HEK293 (cell line): ENCODE measurements at regions of chr11 and their contacts with region 1.

Region 1: DNA sequence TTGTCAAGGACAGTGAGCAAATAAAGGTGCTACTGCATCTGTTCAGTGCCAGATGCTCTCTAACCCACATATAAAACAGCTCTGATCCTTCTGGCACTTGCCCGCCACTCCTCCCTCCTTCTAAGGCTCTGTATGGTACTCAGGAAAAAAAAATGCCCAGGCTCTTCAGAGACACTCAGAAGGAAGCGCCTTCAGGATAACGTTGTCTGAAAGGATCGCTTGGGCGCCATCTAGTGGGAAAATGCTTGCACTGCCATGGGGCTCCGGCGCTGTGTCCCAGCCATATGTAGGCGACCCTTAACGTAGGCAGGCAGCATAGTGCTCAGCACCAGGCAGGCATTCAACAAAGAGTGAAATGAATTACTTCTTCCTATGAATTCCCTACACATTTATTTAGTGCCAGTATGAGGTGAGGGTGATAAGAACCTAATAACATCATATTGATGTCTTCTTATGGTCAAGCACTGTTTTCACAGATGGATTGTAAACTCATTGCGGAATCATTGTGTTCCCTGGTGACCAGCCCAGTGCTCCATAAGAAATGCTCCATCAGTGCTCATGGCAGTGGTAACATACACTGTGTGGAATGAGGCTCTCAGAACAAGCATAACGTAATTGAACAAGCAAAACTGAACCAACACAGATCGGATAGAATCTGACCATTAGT is 39.6 kb downstream of the PAMR1 start:
- H3K4me3 ChIP-seq: no peak overlapping the region
- H3K27ac ChIP-seq: no peak overlapping the region
- H3K4me1 ChIP-seq: no peaks in the 10 kb centered on the region
- CTCF ChIP-seq: peak; percentile 45; the same call in 1 of the 2 replicates

Region 2: DNA sequence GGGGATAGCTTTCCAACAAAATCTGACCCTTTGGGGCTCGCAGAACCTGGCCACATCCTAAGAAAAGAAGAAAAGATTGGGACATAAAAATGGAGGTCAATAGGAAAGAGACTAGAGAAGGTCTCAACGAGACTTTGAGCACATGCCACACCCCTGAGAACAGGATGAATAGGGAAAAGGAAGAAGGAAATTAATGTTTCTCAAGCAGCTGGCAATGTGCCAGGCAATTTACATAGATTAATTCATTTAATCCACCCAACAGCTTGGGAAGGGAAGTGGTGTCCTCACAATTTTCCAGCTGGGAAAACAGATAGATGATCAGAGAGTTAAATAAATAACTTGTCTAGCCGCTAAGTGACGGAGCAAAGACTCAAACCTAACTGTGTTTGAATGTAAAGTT is 11.1 kb before region 1 on chr11:
- CTCF ChIA-PET with region 1: interaction called, 21 read pairs
- POLR2A ChIA-PET with region 1: no interaction called
- H3K4me3 ChIP-seq: no peak overlapping the region
- H3K27ac ChIP-seq: no peak overlapping the region
- H3K4me1 ChIP-seq: no peaks in the 10 kb centered on the region
- CTCF ChIP-seq: no peak

Region 3: DNA sequence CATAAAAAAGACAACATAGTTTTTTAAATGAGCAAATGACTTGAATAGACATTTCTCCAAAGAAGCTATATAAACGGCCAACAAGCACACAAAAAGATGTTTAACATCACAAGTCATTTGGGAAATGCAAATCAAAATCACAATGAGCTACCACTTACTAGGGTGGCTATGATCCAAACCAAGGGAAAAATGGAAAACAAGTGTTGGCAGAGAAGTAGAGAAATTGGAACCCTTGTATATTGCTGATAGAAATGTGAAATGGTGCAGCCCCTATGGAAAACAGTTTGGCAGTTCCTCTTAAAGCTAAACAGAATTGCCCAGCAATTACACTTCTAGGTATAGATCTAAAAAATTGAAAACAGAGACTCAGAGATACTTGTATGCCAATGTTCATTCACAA is 10.6 kb after region 1 on chr11:
- CTCF ChIA-PET with region 1: interaction called, 36 read pairs
- POLR2A ChIA-PET with region 1: no interaction called
- H3K4me3 ChIP-seq: no peak overlapping the region
- H3K27ac ChIP-seq: no peak overlapping the region
- H3K4me1 ChIP-seq: no peaks in the 10 kb centered on the region
- CTCF ChIP-seq: no peak

Region 4: GRCh38 chr11:36149538-36150242 is 663.9 kb after region 1 on chr11:
- CTCF ChIA-PET with region 1: interaction called, 10 read pairs
- POLR2A ChIA-PET with region 1: no interaction called
- H3K4me3 ChIP-seq: no peak overlapping the region
- H3K27ac ChIP-seq: no peak overlapping the region
- H3K4me1 ChIP-seq: no peaks in the 10 kb centered on the region; the same call in 1 of the 2 replicates
- CTCF ChIP-seq: no peak

Region 5: GRCh38 chr11:36258730-36259360 is 773.1 kb after region 1 on chr11:
- CTCF ChIA-PET with region 1: interaction called, 14 read pairs
- POLR2A ChIA-PET with region 1: no interaction called
- H3K4me3 ChIP-seq: no peak overlapping the region
- H3K27ac ChIP-seq: no peak overlapping the region
- H3K4me1 ChIP-seq: no peaks in the 10 kb centered on the region
- CTCF ChIP-seq: peak; percentile 18; the same call in 1 of the 2 replicates